Caco-2 (cell line): ENCODE measurements at regions of chr2 and their contacts with region 1.

Region 1: DNA sequence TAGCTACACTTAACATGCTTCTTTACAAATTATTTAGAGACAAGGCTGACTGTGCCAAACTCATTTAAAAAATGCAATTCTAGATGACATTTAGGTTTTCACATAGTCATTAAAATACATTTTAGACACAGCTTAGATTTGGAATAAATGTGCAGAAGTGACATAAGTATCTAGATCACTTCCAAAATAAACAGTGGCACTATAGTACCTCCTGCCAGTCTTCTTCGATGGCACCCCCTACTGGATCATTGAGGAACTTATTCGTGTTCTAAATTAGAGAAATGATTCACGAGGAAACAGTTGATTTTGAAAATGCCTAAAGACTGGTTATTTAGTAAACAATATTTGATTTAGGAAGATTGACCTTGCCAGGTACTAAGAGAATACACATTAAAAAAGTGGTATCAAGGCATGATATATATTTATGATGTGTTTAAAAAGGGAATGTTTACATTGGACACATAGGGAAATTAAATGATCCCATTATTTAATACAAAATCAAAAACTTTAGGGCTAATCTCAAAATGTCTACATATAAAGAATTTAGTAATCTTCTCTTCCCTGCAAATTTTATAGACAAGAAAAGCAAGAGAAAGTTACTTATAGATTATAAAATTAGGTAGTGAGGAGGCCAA is 323.9 kb downstream of the XIRP2 start:
- DNase-seq: peak in 1 of 2 experiments; percentile 58
- H3K4me3 ChIP-seq: no peak overlapping the region
- H3K4me3 Mint-ChIP-seq: no peak overlapping the region
- H3K27ac Mint-ChIP-seq: no peak overlapping the region
- H3K4me1 ChIP-seq: no peaks in the 10 kb centered on the region
- H3K4me1 Mint-ChIP-seq: no peaks in the 10 kb centered on the region
- H3K27me3 ChIP-seq: no peaks in the 10 kb centered on the region
- H3K27me3 Mint-ChIP-seq: no peaks in the 10 kb centered on the region
- CTCF ChIP-seq: peak; percentile 60

Region 2: DNA sequence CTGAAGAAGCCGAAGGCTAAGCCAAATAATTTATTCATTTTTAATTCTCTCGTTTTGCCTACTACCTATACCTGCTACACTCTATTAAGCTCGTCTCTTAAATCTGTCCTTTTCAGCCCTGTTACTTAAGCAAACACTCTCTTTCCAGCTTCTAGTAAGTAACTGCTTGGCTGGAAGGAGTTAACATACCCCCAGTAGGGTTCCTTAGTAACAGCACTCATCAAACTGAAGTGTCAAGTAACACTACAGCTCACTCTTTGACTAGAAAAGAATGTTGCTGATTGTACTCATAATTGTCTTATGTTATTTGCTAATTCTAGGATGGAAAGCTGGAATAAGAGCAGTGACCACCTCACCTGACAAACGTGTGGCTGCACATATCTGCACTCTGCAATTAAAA is 598.1 kb before region 1 on chr2:
- CTCF ChIA-PET with region 1: no interaction called
- POLR2A ChIA-PET with region 1: no interaction called
- intact Hi-C with region 1: no loop called
- DNase-seq: no peak
- H3K4me3 ChIP-seq: no peak overlapping the region
- H3K4me3 Mint-ChIP-seq: no peak overlapping the region
- H3K27ac Mint-ChIP-seq: no peak overlapping the region
- H3K4me1 ChIP-seq: 0 out of 2 replicates have a peak, but pooled peaks cover 5% of the 10 kb centered on the region
- H3K4me1 Mint-ChIP-seq: peaks cover 6% of the 10 kb centered on the region
- H3K27me3 ChIP-seq: no peaks in the 10 kb centered on the region
- H3K27me3 Mint-ChIP-seq: no peaks in the 10 kb centered on the region
- CTCF ChIP-seq: no peak

Region 3: GRCh38 chr2:166900700-166901099 is 311.4 kb before region 1 on chr2:
- CTCF ChIA-PET with region 1: interaction called, 4 read pairs
- POLR2A ChIA-PET with region 1: no interaction called
- intact Hi-C with region 1: loop called (anchors 2 kb)
- DNase-seq: peak in 1 of 2 experiments; percentile 28
- H3K4me3 ChIP-seq: no peak overlapping the region
- H3K4me3 Mint-ChIP-seq: no peak overlapping the region
- H3K27ac Mint-ChIP-seq: no peak overlapping the region
- H3K4me1 ChIP-seq: no peaks in the 10 kb centered on the region
- H3K4me1 Mint-ChIP-seq: no peaks in the 10 kb centered on the region
- H3K27me3 ChIP-seq: no peaks in the 10 kb centered on the region
- H3K27me3 Mint-ChIP-seq: no peaks in the 10 kb centered on the region
- CTCF ChIP-seq: peak; percentile 40 to 52

Region 4: DNA sequence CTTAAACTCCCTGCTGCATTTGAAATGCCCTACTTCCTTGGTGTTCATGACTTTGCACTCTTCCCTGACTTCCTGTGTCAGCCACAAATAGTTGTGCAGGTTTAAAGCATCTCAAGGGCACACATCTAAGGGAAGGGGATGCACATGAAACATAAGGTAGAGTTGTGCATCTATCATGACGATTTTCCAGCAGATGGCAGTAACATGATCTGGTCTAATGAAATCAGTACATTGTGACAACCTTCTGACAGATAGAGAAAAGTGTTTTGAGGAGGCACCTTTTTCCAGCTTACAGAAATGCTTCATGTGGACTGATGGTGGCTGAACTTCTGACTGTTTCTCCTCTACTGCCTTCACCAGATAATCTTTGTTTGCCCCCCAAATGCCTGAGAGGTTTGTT is 85.0 kb before region 1 on chr2:
- CTCF ChIA-PET with region 1: no interaction called
- POLR2A ChIA-PET with region 1: no interaction called
- intact Hi-C with region 1: loop called (anchors 1 kb)
- DNase-seq: peak in 1 of 2 experiments; percentile 4
- H3K4me3 ChIP-seq: no peak overlapping the region
- H3K4me3 Mint-ChIP-seq: no peak overlapping the region
- H3K27ac Mint-ChIP-seq: no peak overlapping the region
- H3K4me1 ChIP-seq: no peaks in the 10 kb centered on the region
- H3K4me1 Mint-ChIP-seq: no peaks in the 10 kb centered on the region
- H3K27me3 ChIP-seq: no peaks in the 10 kb centered on the region
- H3K27me3 Mint-ChIP-seq: peaks cover 2% of the 10 kb centered on the region
- CTCF ChIP-seq: peak in 1 of 2 experiments; percentile 29